CD8-positive, alpha-beta T cell (primary cell): ENCODE measurements at regions of chr19 and their contacts with region 1.

Region 1: DNA sequence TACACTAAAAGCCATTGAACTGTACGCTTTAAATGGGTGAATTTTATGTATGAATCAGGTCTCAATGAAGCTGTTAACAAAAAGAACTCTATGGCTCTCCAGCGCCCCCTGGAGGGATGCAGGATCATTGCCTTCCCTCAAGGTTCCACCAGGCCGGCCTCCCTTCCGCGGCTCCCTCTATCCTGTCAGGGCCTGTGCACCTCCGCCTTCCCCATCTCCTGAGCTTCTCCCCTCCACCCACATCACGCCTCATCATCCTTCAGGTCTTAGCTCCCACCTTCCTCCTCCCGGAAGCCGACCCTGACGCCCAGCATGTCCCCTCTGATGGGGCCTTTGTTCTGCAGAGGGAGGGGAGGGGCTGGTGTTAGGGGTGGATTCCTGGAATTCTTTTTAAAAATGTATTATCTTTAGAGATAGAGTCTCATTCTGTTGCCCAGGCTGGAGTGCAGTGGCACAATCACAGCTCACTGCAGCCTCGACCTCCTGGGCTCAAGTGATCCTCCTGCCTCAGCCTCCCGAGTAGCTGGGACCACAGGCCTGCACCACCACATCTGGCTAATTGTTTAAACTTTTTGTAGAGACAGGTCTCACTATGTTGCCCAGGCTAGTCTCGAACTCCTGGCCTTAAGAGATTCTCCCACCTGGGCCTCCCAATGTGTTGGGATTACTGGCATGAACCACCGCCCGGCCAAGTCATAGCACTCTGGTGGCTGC is 27.7 kb downstream of the MEIS3 start:
- DNase-seq: peak; percentile 69 to 89 (median 81)
- ATAC-seq: peak; percentile 79
- H3K4me3 ChIP-seq: no peak overlapping the region
- H3K4me3 Mint-ChIP-seq: no peak overlapping the region
- H3K27ac ChIP-seq: no peak overlapping the region
- H3K27ac Mint-ChIP-seq: no peak overlapping the region
- H3K4me1 ChIP-seq: no peaks in the 10 kb centered on the region
- H3K4me1 Mint-ChIP-seq: peaks cover 4% of the 10 kb centered on the region
- H3K27me3 ChIP-seq: peaks cover 0 to 3% of the 10 kb centered on the region in 2 experiments
- H3K27me3 Mint-ChIP-seq: peaks cover 22% of the 10 kb centered on the region
- CTCF ChIP-seq: peak; percentile 88

Region 2: GRCh38 chr19:46850228-46851203 is 541.2 kb before region 1 on chr19 and contains the start of gene AP2S1:
- CTCF ChIA-PET with region 1: no interaction called
- POLR2A ChIA-PET with region 1: no interaction called
- intact Hi-C with region 1: no loop called
- DNase-seq: peak; percentile 83 to 97 (median 92)
- ATAC-seq: peak; percentile 95
- H3K4me3 ChIP-seq: peak within 1 kb of the TSS; percentile 68 to 88
- H3K4me3 Mint-ChIP-seq: peak within 1 kb of the TSS; percentile 93
- H3K27ac ChIP-seq: peak within 1 kb of the TSS; percentile 44 to 68
- H3K27ac Mint-ChIP-seq: peak within 1 kb of the TSS; percentile 89
- H3K4me1 ChIP-seq: peaks cover 12% of the 10 kb centered on the region
- H3K4me1 Mint-ChIP-seq: peaks cover 31% of the 10 kb centered on the region
- H3K27me3 ChIP-seq: no peaks in the 10 kb centered on the region
- H3K27me3 Mint-ChIP-seq: no peaks in the 10 kb centered on the region
- CTCF ChIP-seq: no peak
- total RNA-seq, gene AP2S1: 21.3 to 26.1 TPM

Region 3: GRCh38 chr19:47296036-47296435 is 95.6 kb before region 1 on chr19:
- CTCF ChIA-PET with region 1: interaction called, 80 read pairs
- POLR2A ChIA-PET with region 1: no interaction called
- intact Hi-C with region 1: loop called (anchors 1 kb)
- DNase-seq: peak; percentile 41 to 87 (median 76)
- ATAC-seq: peak; percentile 91
- H3K4me3 ChIP-seq: no peak overlapping the region
- H3K4me3 Mint-ChIP-seq: no peak overlapping the region
- H3K27ac ChIP-seq: no peak overlapping the region
- H3K27ac Mint-ChIP-seq: no peak overlapping the region
- H3K4me1 ChIP-seq: no peaks in the 10 kb centered on the region
- H3K4me1 Mint-ChIP-seq: peaks cover 3% of the 10 kb centered on the region
- H3K27me3 ChIP-seq: no peaks in the 10 kb centered on the region
- H3K27me3 Mint-ChIP-seq: no peaks in the 10 kb centered on the region
- CTCF ChIP-seq: peak; percentile 68

Region 4: DNA sequence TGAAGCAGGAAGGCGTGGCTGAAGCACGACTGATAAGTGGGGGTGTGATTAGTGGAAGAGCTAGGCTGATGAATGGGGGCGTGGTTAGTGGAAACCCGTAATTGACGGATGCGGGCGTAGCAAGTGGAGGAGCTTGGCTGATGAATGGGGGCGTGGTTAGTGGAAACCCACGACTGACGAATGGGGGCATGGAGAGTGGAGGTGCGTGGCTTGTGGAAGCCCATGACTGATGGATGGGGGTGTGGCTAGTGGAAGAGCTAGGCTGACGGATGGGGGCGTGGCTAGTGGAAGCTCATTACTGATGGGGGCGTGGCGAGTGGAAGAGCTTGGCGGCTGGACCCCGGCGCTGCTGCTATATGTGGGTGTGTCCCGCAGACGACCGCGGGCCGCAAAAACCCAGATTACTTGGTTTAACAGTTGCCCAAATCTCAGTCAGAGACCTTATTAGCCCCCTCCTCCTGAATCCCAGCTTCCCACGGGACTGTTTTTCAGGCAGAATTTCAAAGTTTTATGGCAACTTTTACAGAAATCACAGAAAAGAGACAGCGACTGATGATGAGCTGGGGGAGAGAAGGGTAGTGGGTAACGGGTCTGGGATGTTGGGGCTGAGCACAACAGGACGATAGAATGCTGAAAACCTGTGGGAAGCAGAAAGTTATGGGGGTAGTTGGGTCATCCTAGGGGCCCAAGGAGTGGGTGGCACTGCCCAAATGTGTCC is 36.7 kb after region 1 on chr19:
- CTCF ChIA-PET with region 1: interaction called, 10 read pairs
- POLR2A ChIA-PET with region 1: no interaction called
- intact Hi-C with region 1: no loop called
- DNase-seq: peak; percentile 56 to 94 (median 74)
- ATAC-seq: peak; percentile 86
- H3K4me3 ChIP-seq: peak overlapping the region in 1 of 2 experiments; percentile 2
- H3K4me3 Mint-ChIP-seq: no peak overlapping the region
- H3K27ac ChIP-seq: no peak overlapping the region
- H3K27ac Mint-ChIP-seq: no peak overlapping the region
- H3K4me1 ChIP-seq: peaks cover 33% of the 10 kb centered on the region
- H3K4me1 Mint-ChIP-seq: peaks cover 12% of the 10 kb centered on the region
- H3K27me3 ChIP-seq: peaks cover 20 to 34% of the 10 kb centered on the region in 2 experiments
- H3K27me3 Mint-ChIP-seq: peaks cover 56% of the 10 kb centered on the region
- CTCF ChIP-seq: no peak